Activated CD4-positive, alpha-beta memory T cell treated with anti-CD3 and anti-CD28 coated beads for 36 hours (primary cell): ENCODE measurements at regions of chr6 and their contacts with region 1.

Region 1: DNA sequence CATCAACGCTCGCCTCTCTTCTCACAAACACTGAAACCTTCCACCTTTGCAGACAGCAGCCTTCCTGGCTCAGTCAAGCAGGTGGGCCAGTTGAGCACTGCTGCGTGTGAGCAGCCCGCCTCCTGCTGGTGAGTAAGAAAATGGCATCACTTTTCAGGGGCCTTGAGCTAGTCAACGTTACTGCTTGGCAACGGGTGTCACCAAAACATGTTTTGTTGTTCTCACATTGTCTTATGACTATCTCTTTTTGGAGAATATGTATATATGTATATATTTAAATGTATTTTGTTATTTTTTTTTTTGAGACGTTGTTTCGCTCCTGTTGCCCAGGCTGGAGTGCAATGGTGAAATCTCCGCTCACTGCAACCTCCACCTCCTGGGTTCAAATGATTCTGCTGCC is 97.0 kb upstream of the AGPAT4 start:
- DNase-seq: peak; percentile 78
- H3K4me3 Mint-ChIP-seq: no peak overlapping the region
- H3K27ac Mint-ChIP-seq: no peak overlapping the region
- H3K4me1 Mint-ChIP-seq: no peaks in the 10 kb centered on the region
- H3K27me3 Mint-ChIP-seq: no peaks in the 10 kb centered on the region

Region 2: GRCh38 chr6:160520043-160520904 is 850.6 kb before region 1 on chr6:
- CTCF ChIA-PET with region 1: interaction called, 4 read pairs
- POLR2A ChIA-PET with region 1: no interaction called
- intact Hi-C with region 1: loop called (anchors 5 kb)
- DNase-seq: peak; percentile 58
- H3K4me3 Mint-ChIP-seq: peak overlapping the region; percentile 96
- H3K27ac Mint-ChIP-seq: peak overlapping the region; percentile 87
- H3K4me1 Mint-ChIP-seq: peaks cover 33% of the 10 kb centered on the region
- H3K27me3 Mint-ChIP-seq: no peaks in the 10 kb centered on the region

Region 3: GRCh38 chr6:160750276-160750689 is 620.6 kb before region 1 on chr6:
- CTCF ChIA-PET with region 1: interaction called, 3 read pairs
- POLR2A ChIA-PET with region 1: no interaction called
- intact Hi-C with region 1: loop called (anchors 1 kb)
- DNase-seq: peak; percentile 38
- H3K4me3 Mint-ChIP-seq: no peak overlapping the region
- H3K27ac Mint-ChIP-seq: no peak overlapping the region
- H3K4me1 Mint-ChIP-seq: no peaks in the 10 kb centered on the region
- H3K27me3 Mint-ChIP-seq: peaks cover 23% of the 10 kb centered on the region

Region 4: GRCh38 chr6:160863782-160864181 is 507.1 kb before region 1 on chr6:
- CTCF ChIA-PET with region 1: no interaction called
- POLR2A ChIA-PET with region 1: no interaction called
- intact Hi-C with region 1: no loop called
- DNase-seq: no peak
- H3K4me3 Mint-ChIP-seq: no peak overlapping the region
- H3K27ac Mint-ChIP-seq: no peak overlapping the region
- H3K4me1 Mint-ChIP-seq: no peaks in the 10 kb centered on the region
- H3K27me3 Mint-ChIP-seq: no peaks in the 10 kb centered on the region

Region 5: DNA sequence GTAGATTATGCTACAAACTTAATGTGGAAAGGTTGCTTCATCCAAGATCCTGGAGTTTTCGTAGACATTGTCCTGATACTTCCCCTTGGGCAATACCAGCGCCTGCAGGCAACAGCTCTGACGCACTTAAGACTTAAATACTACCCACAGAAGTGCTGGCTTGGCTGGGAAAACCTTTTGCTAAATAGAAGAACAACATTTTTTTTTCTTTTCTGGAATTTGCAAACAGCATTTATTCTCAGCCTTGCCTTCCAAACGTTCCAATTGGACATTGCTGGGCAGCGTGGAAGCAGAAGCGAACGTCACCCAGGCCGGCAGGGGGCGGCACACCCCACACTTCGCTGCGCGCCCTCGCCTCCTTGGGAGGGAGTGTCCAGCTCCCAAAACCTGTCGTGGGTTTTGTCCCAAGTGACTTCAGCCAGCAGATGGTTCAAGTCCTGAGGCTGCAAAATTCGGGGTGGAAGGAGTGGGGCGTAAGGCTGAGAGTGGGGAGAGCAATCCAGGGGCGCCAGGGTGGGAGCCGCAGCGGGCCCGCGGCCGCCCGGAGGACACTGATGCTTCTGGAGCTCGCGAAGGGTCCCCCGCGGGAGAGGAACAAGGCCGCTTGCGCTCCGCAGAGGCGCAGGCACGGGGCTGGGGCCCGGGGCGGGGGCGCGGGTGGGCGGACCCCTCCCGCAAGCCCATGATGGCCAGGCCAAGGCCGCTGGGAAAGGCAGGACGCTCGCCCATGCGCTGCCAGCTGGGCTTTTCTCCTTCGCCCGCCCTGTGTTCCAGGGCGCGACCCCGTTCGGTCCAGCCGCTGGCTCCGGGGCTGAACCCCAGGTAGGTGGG is 440.1 kb before region 1 on chr6:
- CTCF ChIA-PET with region 1: interaction called, 380 read pairs
- POLR2A ChIA-PET with region 1: no interaction called
- intact Hi-C with region 1: loop called (anchors 1 kb)
- DNase-seq: peak; percentile 67
- H3K4me3 Mint-ChIP-seq: peak overlapping the region; percentile 44
- H3K27ac Mint-ChIP-seq: no peak overlapping the region
- H3K4me1 Mint-ChIP-seq: peaks cover 6% of the 10 kb centered on the region
- H3K27me3 Mint-ChIP-seq: peaks cover 37% of the 10 kb centered on the region

Region 6: GRCh38 chr6:161111261-161111660 is 259.6 kb before region 1 on chr6:
- CTCF ChIA-PET with region 1: interaction called, 6 read pairs
- POLR2A ChIA-PET with region 1: no interaction called
- intact Hi-C with region 1: loop called (anchors 5 kb)
- DNase-seq: peak; percentile 36
- H3K4me3 Mint-ChIP-seq: no peak overlapping the region
- H3K27ac Mint-ChIP-seq: peak overlapping the region; percentile 83
- H3K4me1 Mint-ChIP-seq: peaks cover 38% of the 10 kb centered on the region
- H3K27me3 Mint-ChIP-seq: no peaks in the 10 kb centered on the region

Region 7: GRCh38 chr6:161353208-161353613 is 17.7 kb before region 1 on chr6:
- CTCF ChIA-PET with region 1: interaction called, 15 read pairs
- POLR2A ChIA-PET with region 1: no interaction called
- intact Hi-C with region 1: no loop called
- DNase-seq: no peak
- H3K4me3 Mint-ChIP-seq: no peak overlapping the region
- H3K27ac Mint-ChIP-seq: no peak overlapping the region
- H3K4me1 Mint-ChIP-seq: no peaks in the 10 kb centered on the region
- H3K27me3 Mint-ChIP-seq: no peaks in the 10 kb centered on the region

Region 8: GRCh38 chr6:161607696-161608297 is 236.9 kb after region 1 on chr6:
- CTCF ChIA-PET with region 1: no interaction called
- POLR2A ChIA-PET with region 1: no interaction called
- intact Hi-C with region 1: no loop called
- DNase-seq: no peak
- H3K4me3 Mint-ChIP-seq: no peak overlapping the region
- H3K27ac Mint-ChIP-seq: no peak overlapping the region
- H3K4me1 Mint-ChIP-seq: no peaks in the 10 kb centered on the region
- H3K27me3 Mint-ChIP-seq: no peaks in the 10 kb centered on the region